A673 (cell line): ENCODE measurements at regions of chr1 and their contacts with region 1.

Region 1: GRCh38 chr1:87335175-87335884 is 6.7 kb downstream of the LMO4 start:
- DNase-seq: peak; percentile 61
- H3K4me3 ChIP-seq: peak overlapping the region; percentile 63
- H3K27ac ChIP-seq: peak overlapping the region; percentile 84
- H3K4me1 ChIP-seq: peaks cover 42% of the 10 kb centered on the region
- H3K27me3 ChIP-seq: no peaks in the 10 kb centered on the region
- CTCF ChIP-seq: no peak; the same call in 1 of the 2 replicates

Region 2: GRCh38 chr1:86447198-86447790 is 888.0 kb before region 1 on chr1:
- CTCF ChIA-PET with region 1: no interaction called
- POLR2A ChIA-PET with region 1: interaction called, 13 read pairs
- intact Hi-C with region 1: no loop called
- DNase-seq: no peak
- H3K4me3 ChIP-seq: no peak overlapping the region
- H3K27ac ChIP-seq: no peak overlapping the region
- H3K4me1 ChIP-seq: no peaks in the 10 kb centered on the region
- H3K27me3 ChIP-seq: no peaks in the 10 kb centered on the region
- CTCF ChIP-seq: no peak

Region 3: GRCh38 chr1:86852782-86853408 is 482.4 kb before region 1 on chr1:
- CTCF ChIA-PET with region 1: no interaction called
- POLR2A ChIA-PET with region 1: no interaction called
- intact Hi-C with region 1: no loop called
- DNase-seq: peak; percentile 42
- H3K4me3 ChIP-seq: no peak overlapping the region
- H3K27ac ChIP-seq: no peak overlapping the region
- H3K4me1 ChIP-seq: no peaks in the 10 kb centered on the region
- H3K27me3 ChIP-seq: no peaks in the 10 kb centered on the region
- CTCF ChIP-seq: no peak

Region 4: DNA sequence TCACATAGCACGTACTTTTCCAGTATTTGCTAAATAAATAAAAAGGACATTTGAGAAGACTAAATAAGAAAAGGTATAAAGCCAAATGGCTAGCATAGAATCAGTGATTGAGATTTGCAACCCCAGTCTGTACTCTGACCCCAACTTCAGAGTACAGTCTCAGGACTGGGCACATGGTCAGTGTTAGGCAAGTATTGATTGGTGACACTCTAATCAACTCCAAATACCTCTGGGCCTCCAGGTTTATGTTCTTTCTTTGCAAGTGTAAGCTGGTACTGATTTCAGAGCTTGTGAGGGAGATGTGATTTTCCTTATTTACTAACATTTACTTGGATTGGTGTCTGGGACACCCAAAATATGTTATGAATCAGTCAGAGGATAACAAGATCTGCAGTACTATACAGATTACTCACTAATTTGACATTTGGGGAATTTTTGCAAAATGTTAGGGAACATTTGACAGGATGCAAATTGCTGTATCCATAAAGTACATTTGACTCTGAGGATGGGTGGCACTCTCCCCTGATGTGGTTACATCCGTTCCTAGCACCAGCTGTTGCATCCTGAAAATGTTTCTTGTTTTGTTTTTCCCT is 27.6 kb after region 1 on chr1:
- CTCF ChIA-PET with region 1: no interaction called
- POLR2A ChIA-PET with region 1: no interaction called
- intact Hi-C with region 1: no loop called
- DNase-seq: no peak
- H3K4me3 ChIP-seq: no peak overlapping the region
- H3K27ac ChIP-seq: no peak overlapping the region
- H3K4me1 ChIP-seq: no peaks in the 10 kb centered on the region
- H3K27me3 ChIP-seq: no peaks in the 10 kb centered on the region
- CTCF ChIP-seq: no peak

Region 5: DNA sequence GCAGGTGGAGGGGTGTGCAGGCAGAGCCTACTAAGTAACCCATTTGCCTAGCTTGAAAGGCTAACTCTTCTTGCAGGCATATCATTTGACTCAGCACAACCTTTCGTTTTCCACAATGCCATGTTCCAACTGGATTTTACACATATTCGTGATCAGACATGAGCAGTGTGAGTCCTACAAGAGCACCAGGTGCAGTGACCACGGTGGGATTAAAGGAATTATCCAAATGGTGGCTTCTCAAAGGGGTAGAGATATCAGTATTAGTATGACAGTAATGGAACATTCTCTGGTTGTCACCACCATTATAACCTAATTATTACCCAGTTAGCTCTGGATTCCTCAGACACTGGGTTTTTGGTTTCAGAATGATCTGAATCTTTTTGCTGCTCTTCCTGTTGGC is 316.8 kb after region 1 on chr1:
- CTCF ChIA-PET with region 1: no interaction called
- POLR2A ChIA-PET with region 1: no interaction called
- intact Hi-C with region 1: no loop called
- DNase-seq: no peak
- H3K4me3 ChIP-seq: no peak overlapping the region
- H3K27ac ChIP-seq: no peak overlapping the region
- H3K4me1 ChIP-seq: no peaks in the 10 kb centered on the region
- H3K27me3 ChIP-seq: no peaks in the 10 kb centered on the region
- CTCF ChIP-seq: no peak